Dorsolateral prefrontal cortex (tissue), 120 donors: ENCODE measurements at regions of chr22 and their contacts with region 1.

Region 1: DNA sequence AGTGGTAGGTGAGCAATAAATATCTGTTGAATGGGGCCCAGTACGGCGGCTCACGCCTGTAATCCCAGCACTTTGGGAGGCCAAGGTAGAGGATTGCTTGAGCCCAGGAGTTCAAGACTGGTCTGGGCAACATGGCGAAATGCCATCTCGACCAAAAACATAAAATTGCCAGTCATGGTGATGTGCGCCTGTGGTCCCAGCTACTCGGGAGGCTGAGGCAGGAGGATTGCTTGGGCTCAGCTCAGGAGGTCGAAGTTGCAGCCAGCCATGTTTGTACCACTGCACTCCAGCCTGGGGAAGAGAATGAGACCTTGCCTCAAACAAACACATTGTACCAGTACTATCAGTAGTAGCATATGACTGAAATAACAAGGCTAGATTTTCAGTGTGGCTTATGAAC is 4.2 kb downstream of the SGSM3 start:
- DNase-seq: no peak
- H3K4me3 ChIP-seq: no peak overlapping the region
- H3K27ac ChIP-seq: no peak overlapping the region
- H3K27me3 ChIP-seq: no peaks in the 10 kb centered on the region
- CTCF ChIP-seq: no peak

Region 2: GRCh38 chr22:40323681-40324171 is 50.8 kb before region 1 on chr22:
- intact Hi-C with region 1: no loop called
- DNase-seq: no peak
- H3K4me3 ChIP-seq: no peak overlapping the region
- H3K27ac ChIP-seq: peak overlapping the region in 11 of 59 donors; percentile 3 to 53 (median 12)
- H3K27me3 ChIP-seq: no peaks in the 10 kb centered on the region
- CTCF ChIP-seq: no peak

Region 3: GRCh38 chr22:40405178-40406062 is 30.9 kb after region 1 on chr22:
- intact Hi-C with region 1: loop called in 1 of 2 experiments (anchors 5 kb)
- DNase-seq: peak in 1 of 10 donors; percentile 32
- H3K4me3 ChIP-seq: no peak overlapping the region
- H3K27ac ChIP-seq: peak overlapping the region in 11 of 59 donors; percentile 4 to 56 (median 29)
- H3K27me3 ChIP-seq: no peaks in the 10 kb centered on the region
- CTCF ChIP-seq: no peak

Region 4: DNA sequence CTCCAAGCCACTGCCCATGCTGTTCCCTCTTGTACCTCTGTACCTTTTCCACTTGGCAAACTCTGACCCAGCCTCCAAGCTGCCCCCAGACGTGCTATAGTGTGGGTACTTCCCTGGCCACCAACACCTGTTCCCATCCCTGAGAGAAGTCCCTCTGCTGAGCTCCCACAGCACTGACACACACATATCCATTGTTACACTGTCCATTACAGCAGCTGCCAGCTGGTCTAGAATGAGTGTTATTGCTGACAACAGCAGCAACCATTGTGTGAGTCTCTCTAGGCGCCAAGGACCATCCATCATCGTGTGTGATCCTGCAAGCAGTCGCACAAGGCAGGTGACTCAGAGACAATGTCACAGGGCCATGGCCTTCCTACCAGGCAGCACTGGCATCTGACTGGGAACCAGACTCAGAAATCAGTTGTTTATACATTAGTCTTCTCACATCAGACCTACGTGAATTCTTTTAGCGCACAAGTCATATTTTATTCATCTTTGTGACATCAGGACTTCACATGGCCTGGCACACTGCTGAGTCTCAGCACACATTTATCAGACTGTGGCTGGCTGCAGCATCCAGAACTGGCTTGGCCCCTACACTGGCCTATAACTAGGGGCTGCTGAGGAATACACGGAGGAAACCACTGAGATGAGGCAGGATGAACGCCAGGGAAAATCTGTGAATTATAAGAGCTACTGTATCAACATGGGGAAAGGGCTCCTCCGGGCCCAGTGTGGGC is 52.2 kb after region 1 on chr22:
- intact Hi-C with region 1: no loop called
- DNase-seq: peak in 8 of 10 donors; percentile 70 to 93 (median 83)
- H3K4me3 ChIP-seq: peak overlapping the region in 10 of 59 donors; percentile 1 to 48 (median 8)
- H3K27ac ChIP-seq: peak overlapping the region; percentile 41 to 94 (median 84)
- H3K27me3 ChIP-seq: no peaks in the 10 kb centered on the region
- CTCF ChIP-seq: peak in 6 of 56 donors; percentile 12 to 38 (median 18)